SK-N-SH (cell line): ENCODE measurements at regions of chr17 and their contacts with region 1.

Region 1: DNA sequence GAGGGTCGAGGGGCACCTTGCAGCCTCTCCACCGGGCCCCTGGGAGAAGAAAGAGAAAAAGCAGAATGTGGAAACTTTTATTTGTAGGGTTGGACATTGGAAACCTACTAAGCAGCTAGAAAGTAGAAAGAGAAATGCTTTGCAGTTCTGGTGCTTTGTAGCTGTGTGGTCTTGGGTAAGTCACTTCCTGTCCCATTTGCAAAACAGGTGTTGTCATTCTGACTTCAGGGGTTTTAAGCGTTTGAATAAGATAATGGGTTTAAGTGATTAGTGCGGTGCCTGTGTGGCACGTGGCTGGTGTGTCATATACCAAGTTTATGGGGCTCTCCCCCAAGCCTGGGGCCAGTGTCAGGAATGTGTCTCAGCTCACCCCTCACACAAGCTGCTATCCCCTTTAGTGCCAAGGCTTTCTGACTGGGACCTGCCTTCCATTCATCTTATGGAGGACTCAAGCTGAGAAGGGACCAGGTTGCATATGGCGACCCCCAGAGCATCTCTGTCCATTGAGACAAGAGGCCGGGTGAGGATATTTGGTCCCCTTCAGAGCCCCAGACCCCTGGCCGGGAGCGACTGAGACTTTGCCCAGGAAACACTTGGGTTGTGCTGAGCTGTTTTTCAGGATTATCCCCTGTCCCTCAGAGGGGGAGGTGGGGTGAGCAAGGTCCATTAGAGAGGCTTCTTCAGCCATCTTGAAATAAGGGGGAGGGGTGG is 1.7 kb downstream of the CA4 start:
- DNase-seq: no peak
- H3K4me3 ChIP-seq: no peak overlapping the region
- H3K27ac ChIP-seq: no peak overlapping the region
- H3K4me1 ChIP-seq: peaks cover 11 to 12% of the 10 kb centered on the region in 2 experiments; a peak in 2 of 4 replicates
- H3K27me3 ChIP-seq: peaks cover 28% of the 10 kb centered on the region
- CTCF ChIP-seq: no peak
- EP300 ChIP-seq: no peak
- RAD21 ChIP-seq: no peak

Region 2: DNA sequence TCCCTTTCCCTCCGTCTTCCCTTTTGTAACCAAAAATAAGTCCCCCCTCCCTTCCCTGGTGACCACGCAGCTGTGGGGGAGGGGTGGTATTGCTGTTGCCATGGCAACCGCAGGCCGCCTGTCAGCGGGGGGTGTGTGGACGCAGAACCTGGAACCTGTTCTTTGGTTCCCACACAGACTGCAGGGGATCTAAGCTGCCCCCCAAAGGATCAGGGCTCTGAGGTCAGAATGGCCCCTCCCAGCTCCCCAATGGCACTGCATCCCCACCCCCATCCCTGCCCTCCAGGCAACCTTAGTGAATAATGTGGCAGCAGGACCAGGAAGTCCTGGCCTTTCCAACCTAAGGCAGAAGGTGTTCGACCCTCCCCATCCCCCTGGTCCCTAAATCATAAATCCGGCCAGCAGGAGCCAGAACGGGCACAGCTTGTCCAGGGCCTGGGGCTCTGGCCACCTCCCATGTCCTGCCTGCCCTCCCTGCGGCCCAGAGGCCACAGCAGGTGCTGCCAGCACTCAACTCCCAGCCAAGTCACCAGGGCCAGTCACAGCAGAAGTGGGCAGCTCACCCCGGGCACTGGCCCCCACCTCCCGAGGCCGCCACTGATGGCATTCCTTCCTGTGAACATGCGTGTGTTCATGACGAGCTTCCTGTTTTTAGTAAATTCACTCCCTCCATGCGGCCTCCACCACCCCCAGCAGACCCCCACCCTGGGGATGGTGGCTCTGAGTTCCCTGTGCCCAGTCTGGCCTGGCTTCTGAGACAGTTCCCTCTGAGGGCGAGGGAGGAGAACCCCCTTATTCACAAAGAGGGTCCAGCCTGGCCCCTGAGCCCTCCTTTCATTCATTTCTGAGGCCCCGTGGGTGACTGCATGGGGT is 10.4 kb after region 1 on chr17:
- CTCF ChIA-PET with region 1: interaction called, 10 read pairs
- POLR2A ChIA-PET with region 1: no interaction called
- DNase-seq: peak; percentile 73
- H3K4me3 ChIP-seq: no peak overlapping the region
- H3K27ac ChIP-seq: no peak overlapping the region
- H3K4me1 ChIP-seq: peaks cover 0 to 6% of the 10 kb centered on the region in 2 experiments; a peak in 1 of 4 replicates
- H3K27me3 ChIP-seq: no peaks in the 10 kb centered on the region
- CTCF ChIP-seq: no peak
- EP300 ChIP-seq: no peak
- RAD21 ChIP-seq: no peak

Region 3: GRCh38 chr17:60260540-60260939 is 109.0 kb after region 1 on chr17:
- CTCF ChIA-PET with region 1: no interaction called
- POLR2A ChIA-PET with region 1: no interaction called
- DNase-seq: no peak
- H3K4me3 ChIP-seq: no peak overlapping the region
- H3K27ac ChIP-seq: no peak overlapping the region
- H3K4me1 ChIP-seq: peaks cover 0 to 11% of the 10 kb centered on the region in 2 experiments; a peak in 1 of 4 replicates
- H3K27me3 ChIP-seq: no peaks in the 10 kb centered on the region
- CTCF ChIP-seq: no peak
- EP300 ChIP-seq: no peak
- RAD21 ChIP-seq: no peak